ENCODE measurements at regions of chr17 and their contacts with region 1.

Region 1: DNA sequence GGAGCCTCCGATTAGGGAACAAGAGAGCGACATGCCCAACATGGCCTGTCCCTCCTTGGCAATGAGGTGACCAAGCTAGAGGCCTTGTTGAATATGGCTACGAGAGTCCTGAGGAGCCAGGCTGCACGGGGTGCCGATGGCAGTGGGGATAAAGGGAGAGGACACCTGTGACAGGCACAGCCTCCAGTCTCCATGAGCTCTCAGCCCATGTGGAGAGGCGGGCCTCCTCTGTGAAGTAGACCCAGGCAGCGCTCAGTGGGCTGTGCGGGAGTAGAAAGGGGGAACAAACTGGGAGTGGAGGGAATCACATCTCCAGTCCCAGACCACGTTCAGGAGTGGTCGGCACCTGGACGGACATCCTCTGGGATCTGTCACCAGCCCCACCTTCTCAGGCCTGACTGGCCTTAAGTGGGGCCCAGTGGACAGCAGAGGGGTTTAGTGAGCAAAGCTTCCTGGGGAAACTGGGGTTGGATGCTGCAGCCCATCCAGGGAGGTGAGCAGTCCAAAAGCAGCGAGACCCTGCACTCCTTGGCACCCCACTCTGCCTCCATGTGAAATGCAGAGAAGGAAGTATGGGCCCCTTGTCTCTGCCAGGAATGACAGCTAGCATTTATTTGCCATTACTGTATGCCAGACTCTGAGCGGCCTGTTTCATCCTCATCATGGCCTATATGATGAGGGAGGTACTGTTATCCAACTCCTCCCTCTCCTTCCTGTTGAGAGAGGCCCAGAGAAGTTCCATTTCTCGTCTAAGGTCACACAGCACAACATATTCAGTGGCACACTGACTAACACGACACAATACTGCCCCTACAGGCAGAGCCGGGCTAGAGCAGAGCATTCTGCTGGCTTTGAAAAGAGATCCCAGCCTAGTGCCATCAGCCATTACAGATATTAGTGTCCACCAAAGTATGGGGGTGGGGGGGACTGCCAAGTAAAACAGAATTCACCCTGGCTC is 4.5 kb upstream of the TMEM92 start:
- DNase-seq: peak; percentile 79
- H3K4me3 Mint-ChIP-seq: no peak overlapping the region
- H3K27ac Mint-ChIP-seq: no peak overlapping the region
- H3K4me1 Mint-ChIP-seq: peaks cover 5% of the 10 kb centered on the region
- H3K27me3 Mint-ChIP-seq: peaks cover 15% of the 10 kb centered on the region

Region 2: GRCh38 chr17:50283246-50283645 is 13.5 kb after region 1 on chr17:
- CTCF ChIA-PET with region 1: interaction called, 164 read pairs
- POLR2A ChIA-PET with region 1: no interaction called
- intact Hi-C with region 1: no loop called
- DNase-seq: peak; percentile 80
- H3K4me3 Mint-ChIP-seq: peak overlapping the region; percentile 0
- H3K27ac Mint-ChIP-seq: peak overlapping the region; percentile 43
- H3K4me1 Mint-ChIP-seq: peaks cover 23% of the 10 kb centered on the region
- H3K27me3 Mint-ChIP-seq: peaks cover 38% of the 10 kb centered on the region

Region 3: DNA sequence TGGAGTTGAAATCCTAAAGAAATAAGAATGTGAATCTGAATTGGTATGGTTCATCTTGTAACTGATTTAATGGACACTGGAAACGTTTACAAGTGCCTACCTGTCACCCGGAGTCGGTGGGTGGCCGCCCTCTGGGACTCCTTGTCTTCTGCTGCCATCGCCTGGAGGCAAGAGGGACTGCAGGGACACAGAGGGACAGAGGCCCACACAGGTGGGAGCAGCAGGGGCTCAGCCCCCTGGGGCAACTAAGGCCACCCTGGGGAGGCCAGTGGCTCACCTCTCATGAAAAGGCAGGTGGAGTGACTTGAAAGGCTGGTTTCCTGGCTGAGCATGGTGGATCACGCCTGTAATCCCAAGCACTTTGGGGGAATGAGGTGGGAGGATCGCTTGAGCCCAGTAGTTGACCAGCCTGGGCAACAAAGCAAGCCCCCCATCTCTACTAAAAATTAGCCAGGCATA is 27.7 kb after region 1 on chr17:
- CTCF ChIA-PET with region 1: interaction called, 164 read pairs
- POLR2A ChIA-PET with region 1: no interaction called
- intact Hi-C with region 1: loop called (anchors 1 kb)
- DNase-seq: peak; percentile 90
- H3K4me3 Mint-ChIP-seq: no peak overlapping the region
- H3K27ac Mint-ChIP-seq: no peak overlapping the region
- H3K4me1 Mint-ChIP-seq: peaks cover 8% of the 10 kb centered on the region
- H3K27me3 Mint-ChIP-seq: peaks cover 15% of the 10 kb centered on the region

Region 4: DNA sequence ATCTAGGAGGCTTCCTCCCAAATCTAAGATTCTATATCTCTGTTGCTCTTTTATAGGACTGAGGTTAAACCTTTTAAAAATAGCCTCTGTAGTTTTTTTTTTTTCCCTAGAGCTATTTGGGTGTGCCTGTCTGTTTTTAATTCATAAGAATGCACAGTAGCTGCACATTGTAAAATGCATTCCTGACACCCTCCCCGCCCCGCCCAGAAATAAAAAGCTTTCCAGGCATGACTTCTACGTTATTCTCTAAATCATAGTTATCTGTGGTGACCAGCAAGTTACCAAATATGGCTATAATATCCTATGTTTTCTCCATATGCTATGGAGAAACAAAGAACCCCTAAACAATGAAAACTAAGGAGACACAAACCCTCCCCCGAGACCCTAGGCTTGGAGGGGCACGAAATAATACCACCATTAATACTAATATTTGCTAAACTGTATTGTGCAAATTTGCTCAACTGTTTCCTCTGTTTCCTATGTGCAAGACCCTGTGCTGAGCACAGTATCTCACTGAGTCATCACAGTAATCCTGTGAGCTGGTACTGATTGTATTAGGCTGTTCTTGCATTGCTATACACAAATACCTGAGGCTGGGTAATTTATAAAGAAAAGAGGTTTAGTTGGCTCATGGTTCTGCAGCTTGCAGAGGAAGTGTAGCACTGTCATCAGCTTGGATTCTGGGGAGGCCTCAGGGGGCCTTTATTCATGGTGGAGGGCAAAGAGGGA is 1500.4 kb after region 1 on chr17:
- CTCF ChIA-PET with region 1: no interaction called
- POLR2A ChIA-PET with region 1: no interaction called
- intact Hi-C with region 1: no loop called
- DNase-seq: no peak
- H3K4me3 Mint-ChIP-seq: no peak overlapping the region
- H3K27ac Mint-ChIP-seq: no peak overlapping the region
- H3K4me1 Mint-ChIP-seq: peaks cover 9% of the 10 kb centered on the region
- H3K27me3 Mint-ChIP-seq: peaks cover 8% of the 10 kb centered on the region

Measured in activated CD4-positive, alpha-beta memory T cell treated with anti-CD3 and anti-CD28 coated beads for 36 hours (primary cell).